Naive thymus-derived CD4-positive, alpha-beta T cell (primary cell): ENCODE measurements at regions of chr17 and their contacts with region 1.

Region 1: GRCh38 chr17:72592242-72592966 is 471.6 kb downstream of the SOX9 start:
- DNase-seq: peak in 5 of 9 donors; percentile 6 to 77 (median 37)
- ATAC-seq: peak; percentile 79
- H3K4me3 ChIP-seq: peak overlapping the region; percentile 35
- H3K4me3 Mint-ChIP-seq: peak overlapping the region; percentile 78 to 97 (median 86)
- H3K27ac ChIP-seq: no peak overlapping the region
- H3K27ac Mint-ChIP-seq: peak overlapping the region in 3 of 9 donors; percentile 33 to 71 (median 50)
- H3K4me1 ChIP-seq: peaks cover 6 to 10% of the 10 kb centered on the region in 2 donors
- H3K4me1 Mint-ChIP-seq: peaks cover 13 to 33% (median 25%) of the 10 kb centered on the region in 7 donors
- H3K27me3 ChIP-seq: no peaks in the 10 kb centered on the region
- H3K27me3 Mint-ChIP-seq: peaks cover 46 to 66% (median 53%) of the 10 kb centered on the region in 5 donors

Region 2: DNA sequence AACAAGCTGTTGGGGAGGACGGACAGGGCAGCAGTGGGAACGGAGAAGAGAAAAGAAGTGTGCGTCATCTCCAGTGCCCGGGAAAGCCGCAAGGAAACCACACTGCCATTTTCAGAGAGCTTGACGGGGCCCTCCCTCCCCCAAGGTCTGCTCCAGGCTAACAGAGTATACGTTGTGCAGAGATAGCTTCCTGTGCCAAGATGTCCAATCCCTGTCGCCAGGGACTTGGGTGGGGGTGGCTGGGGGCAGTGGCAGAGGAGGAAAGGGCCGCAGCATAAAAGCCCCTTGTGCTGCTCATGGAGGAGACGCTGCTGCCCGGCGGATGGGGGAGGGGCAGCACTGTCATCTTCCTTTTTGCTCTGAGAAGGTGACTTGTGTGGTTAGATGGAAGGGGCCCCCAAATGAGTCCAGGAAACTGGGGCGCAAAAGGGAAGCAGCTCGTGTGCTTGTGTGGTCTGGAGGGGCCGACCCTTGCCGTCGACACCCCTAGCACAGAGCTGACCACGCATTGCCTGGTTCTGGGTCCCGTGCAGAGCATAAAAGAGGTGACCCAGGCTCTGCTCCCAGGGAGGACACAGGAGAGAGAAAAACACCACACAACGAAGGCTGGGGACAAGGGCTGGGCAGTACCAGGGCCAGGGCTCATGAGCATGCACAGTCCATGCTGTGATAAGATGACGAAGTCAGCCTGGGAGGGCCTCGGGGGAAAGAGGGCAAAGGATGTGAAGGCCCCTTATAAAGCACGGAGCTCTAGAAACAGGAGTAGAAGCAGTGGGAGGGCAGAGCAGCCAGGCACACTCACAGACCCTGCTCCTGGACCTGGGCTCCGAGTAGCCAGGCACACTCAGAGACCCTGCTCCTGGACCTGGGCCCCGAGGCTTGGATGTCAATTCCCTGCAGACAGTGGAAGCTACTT is 127.4 kb after region 1 on chr17:
- CTCF ChIA-PET with region 1: no interaction called
- POLR2A ChIA-PET with region 1: interaction called, 3 read pairs
- intact Hi-C with region 1: loop called in 1 of 2 experiments (anchors 2 kb)
- DNase-seq: peak; percentile 13 to 62 (median 48)
- ATAC-seq: peak; percentile 86
- H3K4me3 ChIP-seq: peak overlapping the region; percentile 41
- H3K4me3 Mint-ChIP-seq: peak overlapping the region; percentile 70 to 86 (median 82)
- H3K27ac ChIP-seq: no peak overlapping the region
- H3K27ac Mint-ChIP-seq: peak overlapping the region; percentile 71 to 95 (median 88)
- H3K4me1 ChIP-seq: peaks cover 13 to 15% of the 10 kb centered on the region in 2 donors
- H3K4me1 Mint-ChIP-seq: peaks cover 16 to 60% (median 18%) of the 10 kb centered on the region in 7 donors
- H3K27me3 ChIP-seq: no peaks in the 10 kb centered on the region
- H3K27me3 Mint-ChIP-seq: no peaks in the 10 kb centered on the region

Region 3: GRCh38 chr17:73092523-73093135 is 500.2 kb after region 1 on chr17 and contains the start of gene SLC39A11:
- CTCF ChIA-PET with region 1: no interaction called
- POLR2A ChIA-PET with region 1: no interaction called
- intact Hi-C with region 1: loop called in 1 of 2 experiments (anchors 1 kb)
- DNase-seq: peak; percentile 77 to 92 (median 85)
- ATAC-seq: peak; percentile 99
- H3K4me3 ChIP-seq: peak within 1 kb of the TSS; percentile 69
- H3K4me3 Mint-ChIP-seq: peak within 1 kb of the TSS; percentile 90 to 100 (median 96)
- H3K27ac ChIP-seq: peak within 1 kb of the TSS; percentile 63
- H3K27ac Mint-ChIP-seq: peak within 1 kb of the TSS; percentile 87 to 99 (median 93)
- H3K4me1 ChIP-seq: peaks cover 7 to 20% of the 10 kb centered on the region in 2 donors
- H3K4me1 Mint-ChIP-seq: peaks cover 0 to 40% (median 32%) of the 10 kb centered on the region in 7 donors
- H3K27me3 ChIP-seq: no peaks in the 10 kb centered on the region
- H3K27me3 Mint-ChIP-seq: peaks cover 0 to 13% (median 0%) of the 10 kb centered on the region in 5 donors
- total RNA-seq, gene SLC39A11: 16.9 to 36.7 (median 21.6) TPM